Gastrocnemius medialis (tissue), 4 donors: ENCODE measurements at regions of chr20 and their contacts with region 1.

Region 1: GRCh38 chr20:1437235-1437904 is 29.3 kb downstream of the NSFL1C start:
- DNase-seq: peak; percentile 41 to 59
- ATAC-seq: peak; percentile 69 to 74
- H3K4me3 ChIP-seq: no peak overlapping the region
- H3K27ac ChIP-seq: no peak overlapping the region
- H3K4me1 ChIP-seq: peaks cover 0 to 3% of the 10 kb centered on the region in 2 donors
- H3K27me3 ChIP-seq: no peaks in the 10 kb centered on the region
- CTCF ChIP-seq: peak; percentile 75 to 86 (median 81)
- POLR2A ChIP-seq: no peak

Region 2: DNA sequence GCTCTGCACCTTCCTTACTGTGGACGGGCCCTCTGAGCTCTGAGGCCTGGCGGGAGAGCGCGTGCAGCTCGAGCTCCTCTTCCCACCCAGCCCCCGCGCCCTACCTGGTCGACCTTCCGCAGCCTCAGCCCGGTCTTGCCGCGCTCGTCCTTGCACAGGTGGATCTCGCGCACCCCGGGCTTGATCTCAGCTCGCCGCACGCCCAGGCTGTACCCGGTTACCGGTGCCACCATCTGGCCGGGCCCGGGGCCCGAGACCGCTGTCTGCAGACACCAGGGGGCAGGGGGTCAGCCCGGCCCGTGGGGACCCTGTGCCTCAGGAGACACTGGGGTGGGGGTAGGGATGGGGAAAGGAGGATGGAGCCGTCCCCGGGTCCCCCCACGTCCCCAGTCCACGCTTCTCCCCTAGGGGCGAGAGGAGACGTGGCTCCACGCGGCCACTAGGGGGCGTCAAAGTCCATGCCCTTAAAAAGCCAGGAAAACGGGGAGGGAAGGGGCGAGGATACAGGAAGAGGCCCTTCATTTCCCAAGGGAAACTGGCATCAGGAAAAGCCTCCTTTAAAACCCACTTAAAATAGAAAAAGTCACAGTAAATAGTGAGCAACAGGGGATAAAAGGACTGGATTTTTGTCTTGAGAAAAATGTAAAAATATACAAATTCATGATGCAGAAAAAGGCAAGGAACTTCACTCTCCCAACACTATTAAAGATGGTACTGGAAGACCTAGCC is 124.0 kb before region 1 on chr20:
- in situ Hi-C with region 1: loop called (anchors 5 to 10 kb)
- intact Hi-C with region 1: loop called (anchors 1 kb)
- DNase-seq: peak; percentile 52 to 61
- ATAC-seq: peak; percentile 85 to 93
- H3K4me3 ChIP-seq: peak overlapping the region in 3 of 4 donors; percentile 23 to 37 (median 32)
- H3K27ac ChIP-seq: no peak overlapping the region
- H3K4me1 ChIP-seq: peaks cover 0 to 10% of the 10 kb centered on the region in 2 donors
- H3K27me3 ChIP-seq: no peaks in the 10 kb centered on the region
- CTCF ChIP-seq: peak; percentile 94 to 99 (median 97)
- POLR2A ChIP-seq: no peak

Region 3: DNA sequence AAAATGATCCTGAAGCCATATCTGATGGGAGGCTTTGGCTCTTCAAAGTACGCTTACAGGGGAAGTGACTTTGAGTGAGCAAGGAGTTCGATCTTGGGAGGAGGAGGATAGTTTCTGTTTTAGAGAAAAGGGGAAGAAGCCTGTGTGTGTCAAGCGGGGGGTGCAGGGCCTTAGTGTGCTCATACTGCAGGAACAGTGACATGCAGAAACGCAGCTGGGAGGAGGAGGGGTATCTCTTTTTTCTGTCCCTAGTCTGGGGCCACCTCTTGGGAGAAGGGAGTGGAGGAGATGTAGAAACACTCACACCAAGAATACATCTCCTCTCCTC is 100.3 kb after region 1 on chr20:
- in situ Hi-C with region 1: no loop called
- intact Hi-C with region 1: no loop called
- DNase-seq: peak; percentile 12 to 32
- ATAC-seq: peak; percentile 21 to 26
- H3K4me3 ChIP-seq: no peak overlapping the region
- H3K27ac ChIP-seq: peak overlapping the region in 1 of 4 donors; percentile 18
- H3K4me1 ChIP-seq: no peaks in the 10 kb centered on the region
- H3K27me3 ChIP-seq: no peaks in the 10 kb centered on the region
- CTCF ChIP-seq: no peak
- POLR2A ChIP-seq: no peak